B cell (primary cell): ENCODE measurements at regions of chr5 and their contacts with region 1.

Region 1: DNA sequence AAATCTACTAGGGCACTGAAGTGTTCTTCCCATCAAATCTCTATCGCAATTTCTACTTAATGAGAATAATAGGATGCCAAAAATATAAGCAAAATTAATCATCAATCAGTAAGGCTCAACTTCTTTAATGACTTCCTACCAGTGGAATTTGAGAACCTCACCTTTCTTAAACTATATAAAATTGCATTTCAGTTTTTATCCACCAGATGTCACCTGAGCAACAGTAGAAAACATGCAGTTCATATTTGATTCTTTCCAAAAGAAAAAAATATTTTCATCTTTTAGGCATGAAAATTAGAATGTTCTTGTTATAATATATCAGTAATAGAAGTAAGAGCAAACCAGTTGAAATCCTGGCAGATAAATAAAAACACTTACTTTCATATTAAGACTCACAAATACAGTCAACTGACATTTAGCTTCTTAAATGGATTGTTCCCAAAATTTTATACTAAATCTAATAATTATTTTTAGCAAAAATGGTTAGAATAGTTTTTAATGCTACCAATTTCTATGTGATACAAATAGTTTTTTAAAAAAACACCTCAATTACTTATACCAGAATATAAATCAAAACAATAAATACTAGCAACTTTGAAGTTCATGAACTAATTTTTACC is 13.4 kb upstream of the CCDC112 start:
- DNase-seq: peak; percentile 63
- ATAC-seq: peak; percentile 54
- H3K4me3 ChIP-seq: no peak overlapping the region
- H3K4me3 Mint-ChIP-seq: no peak overlapping the region
- H3K27ac ChIP-seq: no peak overlapping the region
- H3K27ac Mint-ChIP-seq: no peak overlapping the region
- H3K4me1 ChIP-seq: no peaks in the 10 kb centered on the region
- H3K4me1 Mint-ChIP-seq: no peaks in the 10 kb centered on the region
- H3K27me3 ChIP-seq: peaks cover 0 to 5% (median 3%) of the 10 kb centered on the region in 4 experiments
- H3K27me3 Mint-ChIP-seq: peaks cover 3% of the 10 kb centered on the region
- CTCF ChIP-seq: peak; percentile 89

Region 2: DNA sequence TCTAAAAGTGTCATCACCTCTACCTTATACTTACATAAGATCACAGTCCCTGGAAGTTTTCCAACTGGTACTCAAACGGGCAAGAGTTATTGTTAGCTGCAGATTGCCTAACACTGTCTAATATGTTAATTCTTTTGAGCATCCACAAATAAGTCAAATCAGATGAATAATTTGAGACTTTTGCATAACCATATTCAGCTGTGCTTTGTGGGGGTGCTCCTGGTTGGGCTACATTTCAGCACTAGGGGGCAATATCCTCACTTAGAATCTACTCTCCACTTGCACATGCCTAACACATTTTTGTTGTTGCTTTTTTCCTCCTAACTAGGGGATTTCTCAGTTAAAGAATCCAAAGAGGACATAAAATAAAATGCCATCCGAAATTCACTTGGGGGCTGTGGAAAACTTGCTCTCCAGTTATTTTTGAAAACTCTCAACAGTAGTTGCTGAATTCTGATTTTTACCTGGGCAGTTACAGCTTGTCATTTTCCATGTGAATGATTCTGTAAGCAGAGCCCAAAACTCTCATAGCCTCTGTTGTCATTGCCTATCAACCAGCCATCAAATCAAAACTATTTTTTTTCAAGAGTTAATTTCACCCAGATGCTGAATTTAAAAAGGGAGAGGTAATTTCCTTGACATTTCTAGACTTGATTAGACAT is 211.7 kb before region 1 on chr5:
- CTCF ChIA-PET with region 1: interaction called, 5 read pairs
- POLR2A ChIA-PET with region 1: no interaction called
- intact Hi-C with region 1: loop called (anchors 5 kb)
- DNase-seq: peak; percentile 66
- ATAC-seq: peak; percentile 76
- H3K4me3 ChIP-seq: no peak overlapping the region
- H3K4me3 Mint-ChIP-seq: no peak overlapping the region
- H3K27ac ChIP-seq: no peak overlapping the region
- H3K27ac Mint-ChIP-seq: no peak overlapping the region
- H3K4me1 ChIP-seq: no peaks in the 10 kb centered on the region
- H3K4me1 Mint-ChIP-seq: peaks cover 2% of the 10 kb centered on the region
- H3K27me3 ChIP-seq: no peaks in the 10 kb centered on the region
- H3K27me3 Mint-ChIP-seq: peaks cover 3% of the 10 kb centered on the region
- CTCF ChIP-seq: peak; percentile 83

Region 3: DNA sequence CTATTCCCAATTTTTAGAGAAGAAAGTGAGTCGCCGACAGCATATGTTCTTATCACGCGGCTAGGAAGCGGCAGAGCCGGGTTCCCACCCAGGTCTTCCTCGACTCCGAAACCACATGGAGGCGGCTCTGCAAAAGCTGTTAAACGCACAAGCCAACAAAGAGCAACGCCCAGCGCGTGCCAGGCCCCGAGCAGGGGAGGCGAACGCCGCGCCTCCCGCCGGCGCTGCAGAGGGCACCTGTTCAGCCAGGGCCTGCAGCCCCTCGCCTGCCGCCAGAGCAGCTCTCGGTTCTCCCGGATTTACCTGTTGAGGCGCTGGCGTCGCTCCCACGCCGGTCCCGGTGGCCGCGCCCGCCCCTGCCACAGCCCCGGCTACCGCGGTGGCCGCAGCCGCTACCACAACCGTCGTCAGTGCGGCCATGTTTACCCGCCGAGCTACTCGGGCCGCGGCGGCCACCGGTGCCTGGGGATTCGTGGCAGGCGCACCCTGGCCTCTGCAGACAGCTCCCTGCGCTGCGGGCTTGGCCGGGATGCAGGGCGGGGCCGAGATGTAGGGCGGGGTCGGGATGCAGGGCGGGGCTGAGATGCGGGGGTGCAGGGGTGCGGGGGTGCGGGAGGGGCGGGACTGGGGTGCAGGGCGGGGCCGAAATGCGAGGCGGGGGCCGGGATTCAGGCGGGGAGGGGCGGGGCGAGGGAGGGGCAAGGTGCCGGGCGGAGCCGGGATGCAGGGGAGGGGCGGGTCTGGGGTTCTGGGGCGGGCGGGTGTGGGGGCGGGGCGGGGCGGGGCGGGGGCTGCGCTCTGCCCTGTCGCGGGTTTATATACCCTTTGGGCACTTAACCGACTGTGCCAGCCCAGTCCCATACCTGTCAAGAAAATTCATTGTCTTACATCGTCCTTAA is 13.5 kb before region 1 on chr5 and contains the start of gene CCDC112:
- CTCF ChIA-PET with region 1: interaction called, 28 read pairs
- POLR2A ChIA-PET with region 1: no interaction called
- intact Hi-C with region 1: no loop called
- DNase-seq: peak; percentile 82
- ATAC-seq: peak; percentile 86
- H3K4me3 ChIP-seq: peak within 1 kb of the TSS; percentile 53 to 78 (median 70)
- H3K4me3 Mint-ChIP-seq: peak within 1 kb of the TSS; percentile 86
- H3K27ac ChIP-seq: peak within 1 kb of the TSS in 1 of 2 donors; percentile 39
- H3K27ac Mint-ChIP-seq: peak within 1 kb of the TSS; percentile 16
- H3K4me1 ChIP-seq: peaks cover 7 to 13% of the 10 kb centered on the region in 2 donors
- H3K4me1 Mint-ChIP-seq: peaks cover 16% of the 10 kb centered on the region
- H3K27me3 ChIP-seq: no peaks in the 10 kb centered on the region
- H3K27me3 Mint-ChIP-seq: no peaks in the 10 kb centered on the region
- CTCF ChIP-seq: no peak
- total RNA-seq, gene CCDC112: 9.6 and 11.1 TPM in 2 replicates

Region 4: GRCh38 chr5:115579747-115580173 is 269.9 kb after region 1 on chr5:
- CTCF ChIA-PET with region 1: interaction called, 327 read pairs
- POLR2A ChIA-PET with region 1: interaction called, 3 read pairs
- intact Hi-C with region 1: loop called (anchors 1 kb)
- DNase-seq: peak; percentile 24
- ATAC-seq: peak; percentile 74
- H3K4me3 ChIP-seq: no peak overlapping the region
- H3K4me3 Mint-ChIP-seq: peak overlapping the region; percentile 32
- H3K27ac ChIP-seq: no peak overlapping the region
- H3K27ac Mint-ChIP-seq: peak overlapping the region; percentile 58
- H3K4me1 ChIP-seq: peaks cover 15 to 17% of the 10 kb centered on the region in 2 donors
- H3K4me1 Mint-ChIP-seq: peaks cover 33% of the 10 kb centered on the region
- H3K27me3 ChIP-seq: no peaks in the 10 kb centered on the region
- H3K27me3 Mint-ChIP-seq: no peaks in the 10 kb centered on the region
- CTCF ChIP-seq: no peak

Region 5: DNA sequence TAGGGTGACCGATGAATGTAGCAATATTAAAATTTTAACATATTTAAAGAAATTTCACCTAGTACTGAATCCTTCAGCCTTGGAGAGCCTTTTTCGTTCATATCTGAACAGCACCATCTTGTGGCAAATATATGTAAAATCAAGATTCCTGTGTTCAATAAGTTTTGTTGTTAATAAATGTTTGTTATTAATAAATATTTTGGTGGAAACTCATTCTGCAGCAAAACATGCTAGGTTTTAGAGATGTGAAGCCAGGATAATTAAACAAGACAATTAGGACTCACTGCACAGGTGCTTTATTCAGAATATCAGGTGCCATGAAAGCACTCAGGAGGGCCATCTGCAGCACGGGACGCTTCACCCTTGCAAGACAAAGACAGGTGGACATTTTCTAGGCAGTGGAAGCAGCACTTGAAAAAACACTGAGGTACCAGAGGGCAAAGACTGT is 276.8 kb after region 1 on chr5:
- CTCF ChIA-PET with region 1: interaction called, 61 read pairs
- POLR2A ChIA-PET with region 1: interaction called, 3 read pairs
- intact Hi-C with region 1: loop called (anchors 1 kb)
- DNase-seq: peak; percentile 56
- ATAC-seq: peak; percentile 28
- H3K4me3 ChIP-seq: no peak overlapping the region
- H3K4me3 Mint-ChIP-seq: no peak overlapping the region
- H3K27ac ChIP-seq: no peak overlapping the region
- H3K27ac Mint-ChIP-seq: no peak overlapping the region
- H3K4me1 ChIP-seq: peaks cover 0 to 3% of the 10 kb centered on the region in 2 donors
- H3K4me1 Mint-ChIP-seq: peaks cover 2% of the 10 kb centered on the region
- H3K27me3 ChIP-seq: no peaks in the 10 kb centered on the region
- H3K27me3 Mint-ChIP-seq: no peaks in the 10 kb centered on the region
- CTCF ChIP-seq: peak; percentile 82

Region 6: DNA sequence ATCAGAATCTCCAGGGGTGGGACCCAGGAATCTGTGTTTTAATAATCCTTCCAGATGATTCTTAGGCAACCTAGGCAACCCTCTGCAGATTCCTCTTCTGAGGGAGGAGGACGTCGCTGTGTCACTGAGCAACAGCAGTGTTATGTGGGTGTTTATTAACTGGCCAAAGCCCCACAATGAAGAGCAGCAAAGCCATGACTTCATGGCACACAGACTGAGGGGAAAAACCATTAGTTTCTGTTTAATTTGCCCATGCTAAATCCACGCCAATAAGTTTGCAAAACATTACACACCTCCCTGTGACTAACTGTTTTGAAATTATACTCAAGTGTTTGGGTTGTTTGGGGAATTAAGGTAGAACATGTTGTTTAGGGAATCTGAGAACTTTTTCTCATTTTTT is 399.7 kb after region 1 on chr5:
- CTCF ChIA-PET with region 1: no interaction called
- POLR2A ChIA-PET with region 1: no interaction called
- intact Hi-C with region 1: no loop called
- DNase-seq: no peak
- ATAC-seq: no peak
- H3K4me3 ChIP-seq: no peak overlapping the region
- H3K4me3 Mint-ChIP-seq: no peak overlapping the region
- H3K27ac ChIP-seq: no peak overlapping the region
- H3K27ac Mint-ChIP-seq: no peak overlapping the region
- H3K4me1 ChIP-seq: no peaks in the 10 kb centered on the region
- H3K4me1 Mint-ChIP-seq: no peaks in the 10 kb centered on the region
- H3K27me3 ChIP-seq: peaks cover 0 to 3% (median 2%) of the 10 kb centered on the region in 4 experiments
- H3K27me3 Mint-ChIP-seq: peaks cover 4% of the 10 kb centered on the region
- CTCF ChIP-seq: no peak

Region 7: GRCh38 chr5:116068028-116068632 is 758.3 kb after region 1 on chr5:
- CTCF ChIA-PET with region 1: interaction called, 9 read pairs
- POLR2A ChIA-PET with region 1: no interaction called
- intact Hi-C with region 1: loop called (anchors 1 kb)
- DNase-seq: peak; percentile 74
- ATAC-seq: peak; percentile 43
- H3K4me3 ChIP-seq: no peak overlapping the region
- H3K4me3 Mint-ChIP-seq: no peak overlapping the region
- H3K27ac ChIP-seq: no peak overlapping the region
- H3K27ac Mint-ChIP-seq: no peak overlapping the region
- H3K4me1 ChIP-seq: no peaks in the 10 kb centered on the region
- H3K4me1 Mint-ChIP-seq: no peaks in the 10 kb centered on the region
- H3K27me3 ChIP-seq: no peaks in the 10 kb centered on the region
- H3K27me3 Mint-ChIP-seq: peaks cover 3% of the 10 kb centered on the region
- CTCF ChIP-seq: peak; percentile 96